Left cardiac atrium (tissue), 4 donors: ENCODE measurements at regions of chr10 and their contacts with region 1.

Region 1: GRCh38 chr10:84264611-84265141 is 19.8 kb downstream of the RGR start:
- DNase-seq: peak; percentile 67
- ATAC-seq: peak; percentile 90 to 94

Region 2: DNA sequence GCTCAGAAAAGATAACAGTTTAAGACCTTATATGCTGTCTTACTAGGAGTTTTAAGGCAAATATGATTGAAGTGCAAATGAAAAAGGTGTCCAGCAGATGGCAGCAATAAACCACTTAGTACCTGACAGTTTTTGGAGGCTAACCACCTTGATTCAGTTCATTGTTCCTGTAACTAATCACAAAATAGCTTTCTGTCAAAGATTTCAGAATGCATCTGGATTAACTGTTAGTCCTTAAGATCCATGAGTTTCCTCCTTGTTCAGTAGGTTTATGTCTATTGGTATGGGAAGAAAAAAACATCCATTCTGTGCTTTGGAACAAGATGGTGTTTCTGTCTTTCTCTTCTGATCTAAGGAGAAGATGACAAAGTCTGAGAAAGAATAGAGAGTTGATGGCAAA is 110.3 kb after region 1 on chr10:
- intact Hi-C with region 1: loop called in 1 of 2 experiments (anchors 5 kb)
- DNase-seq: no peak
- ATAC-seq: no peak